ENCODE measurements at regions of chr13 and their contacts with region 1.

Region 1: GRCh38 chr13:79541426-79542049 is 60.6 kb downstream of the NDFIP2 start:
- DNase-seq: no peak

Region 2: GRCh38 chr13:79423801-79424642 is 117.5 kb before region 1 on chr13:
- intact Hi-C with region 1: loop called (anchors 2 kb)
- DNase-seq: no peak

Region 3: DNA sequence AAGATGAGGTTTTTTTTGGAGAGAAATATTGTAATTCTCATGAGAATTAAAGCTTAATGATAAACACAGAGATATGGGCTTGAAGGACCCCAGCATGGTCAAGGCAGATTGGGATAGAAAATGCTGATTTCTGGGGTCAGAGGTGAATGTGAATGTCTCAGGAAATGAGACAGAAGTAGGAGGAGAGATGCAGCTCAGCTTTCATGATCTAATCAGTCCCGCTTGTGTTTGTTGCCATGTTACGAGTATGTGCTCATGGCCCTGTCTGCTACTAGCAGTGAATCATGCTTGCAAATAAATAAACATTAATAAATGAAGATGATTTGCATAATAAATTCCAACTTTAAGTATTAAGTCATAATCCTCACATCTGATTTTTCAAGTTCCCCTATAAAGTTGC is 83.6 kb before region 1 on chr13:
- intact Hi-C with region 1: no loop called
- DNase-seq: no peak

Measured in cardiac septum (tissue), 1 donor.